Posterior vena cava (tissue), 2 donors: ENCODE measurements at regions of chr9 and their contacts with region 1.

Region 1: GRCh38 chr9:72509635-72510034 is 11.8 kb upstream of the TMC1 start:
- DNase-seq: no peak

Region 2: DNA sequence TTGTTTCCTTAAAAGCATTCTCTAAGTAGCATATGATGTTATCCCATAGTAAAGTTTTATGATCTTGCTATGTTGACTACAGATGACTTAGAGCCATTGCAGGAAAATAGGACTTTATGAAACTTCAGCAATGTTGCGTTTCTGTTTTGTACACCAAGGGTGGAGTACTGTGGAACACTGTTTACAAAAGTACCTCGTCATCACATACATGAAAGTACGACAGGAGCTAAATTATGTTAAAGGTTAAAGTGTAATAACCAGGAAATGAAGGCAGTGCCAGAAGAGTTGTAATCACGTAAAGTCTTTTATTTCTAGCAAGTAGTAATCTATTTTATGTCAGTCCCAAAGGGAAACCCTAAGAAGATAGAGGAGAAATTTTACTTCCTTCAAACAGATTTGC is 547.3 kb before region 1 on chr9:
- intact Hi-C with region 1: loop called in 1 of 2 experiments (anchors 10 kb)
- DNase-seq: no peak

Region 3: DNA sequence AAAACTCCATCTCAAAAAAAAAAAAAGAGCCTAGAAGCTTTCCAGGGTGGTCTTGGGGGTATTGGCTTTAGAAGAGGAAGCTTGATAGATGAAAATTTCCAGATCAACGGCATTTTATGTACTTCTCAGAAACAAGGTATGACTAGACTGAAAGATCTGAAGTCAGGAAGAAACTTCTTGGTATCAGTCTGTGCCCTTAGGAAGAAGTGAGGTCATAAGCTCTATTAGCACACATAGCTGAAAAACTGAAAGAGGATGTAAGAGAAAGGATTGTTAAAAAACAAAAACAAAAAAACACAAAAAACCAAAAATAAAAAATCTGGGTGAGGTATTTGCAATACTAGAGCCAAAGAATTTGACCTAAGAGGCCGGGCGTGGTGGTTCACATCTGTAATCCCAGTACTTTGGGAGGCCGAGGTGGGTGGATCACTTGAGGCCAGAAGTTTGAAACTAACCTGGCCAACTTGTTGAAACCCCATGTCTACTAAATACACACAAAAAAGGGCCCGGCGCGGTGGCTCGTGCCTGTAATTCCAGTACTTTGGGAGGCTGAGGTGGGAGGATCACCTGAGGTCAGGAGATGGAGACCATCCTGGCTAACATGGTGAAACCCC is 32.1 kb after region 1 on chr9:
- intact Hi-C with region 1: no loop called
- DNase-seq: no peak

Region 4: DNA sequence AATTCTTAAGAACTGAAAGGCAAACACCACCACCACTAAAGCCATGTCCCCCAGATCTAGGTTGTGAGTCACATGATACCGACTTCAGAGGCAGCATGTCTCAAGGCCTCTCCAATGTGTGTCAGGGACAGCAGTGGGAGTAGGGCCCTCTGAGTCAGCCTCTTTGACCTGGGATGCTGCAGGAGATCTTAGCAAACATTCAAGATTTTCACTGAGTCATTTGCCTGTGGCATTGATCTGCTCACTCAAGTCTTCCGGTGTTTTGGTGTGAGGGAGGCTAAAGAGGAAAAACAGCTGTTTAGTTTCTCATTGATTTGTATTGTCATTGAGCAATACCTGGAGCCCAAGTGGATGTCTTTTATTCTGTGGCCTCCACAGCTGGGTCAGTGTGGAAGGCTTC is 47.9 kb after region 1 on chr9:
- intact Hi-C with region 1: no loop called
- DNase-seq: no peak